ENCODE measurements at regions of chr7 and their contacts with region 1.

Region 1: DNA sequence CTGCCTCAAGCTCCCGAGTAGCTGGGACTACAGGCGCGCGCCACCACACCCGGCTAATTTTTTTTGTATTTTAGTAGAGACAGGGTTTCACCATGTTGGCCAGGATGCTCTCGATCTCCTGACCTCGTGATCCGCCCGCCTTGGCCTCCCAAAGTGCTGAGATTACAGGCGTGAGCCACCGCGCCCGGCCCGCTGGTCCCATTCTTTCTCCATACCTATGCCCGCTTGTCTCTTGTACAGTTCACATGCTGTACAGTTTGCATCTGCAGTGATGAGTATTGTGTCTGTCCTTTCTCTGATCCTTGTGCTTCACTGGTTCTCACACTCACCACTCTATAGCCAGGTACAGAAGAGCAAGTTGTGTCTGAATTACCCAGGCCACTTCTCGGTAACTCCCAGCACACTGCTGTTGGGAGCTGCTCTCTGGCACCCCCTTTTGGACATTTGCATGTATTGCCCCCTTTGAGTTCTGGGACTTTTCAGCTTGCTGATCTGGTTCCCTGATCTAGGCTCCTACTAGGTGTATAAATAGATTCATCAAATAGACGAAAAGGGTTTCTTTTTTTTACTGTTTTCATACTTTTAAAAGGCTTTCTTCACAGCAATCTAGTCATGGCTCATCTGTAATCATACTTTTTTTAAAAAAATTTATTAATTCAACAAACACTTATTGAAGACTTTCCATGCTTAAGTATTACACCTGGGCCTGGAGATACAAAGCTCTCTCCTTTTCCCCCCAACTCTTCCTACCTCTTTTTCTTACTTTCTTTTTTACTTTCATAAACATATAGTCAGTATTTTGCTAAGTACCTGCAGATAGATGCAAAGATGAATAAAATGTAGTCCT is 53.5 kb downstream of the AOAH start:
- DNase-seq: peak; percentile 85
- ATAC-seq: peak; percentile 94
- H3K4me3 Mint-ChIP-seq: no peak overlapping the region
- H3K27ac Mint-ChIP-seq: peak overlapping the region; percentile 63
- H3K4me1 Mint-ChIP-seq: peaks cover 33% of the 10 kb centered on the region
- H3K27me3 Mint-ChIP-seq: no peaks in the 10 kb centered on the region

Region 2: DNA sequence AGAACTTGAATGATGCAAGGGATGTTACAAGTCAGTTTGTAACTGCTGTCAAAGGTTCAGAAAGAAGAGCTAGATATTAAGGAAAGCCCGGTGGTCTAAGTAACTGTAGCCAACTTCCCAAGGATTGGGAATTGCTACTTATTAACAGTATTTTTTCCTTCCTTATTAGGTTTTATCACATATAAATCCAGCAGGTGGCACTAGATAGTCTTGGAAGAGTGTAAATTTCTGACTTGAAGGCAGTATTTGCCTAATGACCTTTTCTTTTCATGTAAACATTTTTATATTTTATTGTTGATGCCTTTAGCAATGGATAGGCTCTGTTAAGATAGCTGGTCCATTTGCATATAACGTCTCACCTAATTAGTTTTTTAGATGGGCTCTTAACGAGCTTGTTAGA is 229.9 kb before region 1 on chr7:
- CTCF ChIA-PET with region 1: interaction called, 19 read pairs
- POLR2A ChIA-PET with region 1: no interaction called
- DNase-seq: no peak
- ATAC-seq: no peak
- H3K4me3 Mint-ChIP-seq: no peak overlapping the region
- H3K27ac Mint-ChIP-seq: no peak overlapping the region
- H3K4me1 Mint-ChIP-seq: no peaks in the 10 kb centered on the region
- H3K27me3 Mint-ChIP-seq: no peaks in the 10 kb centered on the region

Region 3: DNA sequence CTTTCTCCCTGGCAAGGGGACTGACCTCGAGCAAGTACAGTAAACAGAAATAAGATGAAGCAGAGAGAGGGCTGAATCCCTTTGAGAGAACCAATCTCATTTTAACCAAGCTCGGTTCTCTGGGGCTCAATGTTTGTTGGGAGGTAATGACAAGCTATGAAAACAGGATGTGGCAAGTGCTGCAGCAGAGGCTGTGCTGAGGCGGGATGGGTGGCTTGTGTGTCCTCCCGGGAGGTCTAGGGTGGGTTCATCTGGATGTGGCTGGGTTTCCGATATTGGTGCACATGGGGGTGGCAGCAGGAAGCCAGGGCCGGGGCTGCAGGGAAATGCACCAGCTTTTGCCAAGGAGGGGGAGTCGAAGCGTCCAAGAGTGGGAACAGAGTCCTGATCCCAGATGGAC is 31.0 kb before region 1 on chr7:
- CTCF ChIA-PET with region 1: interaction called, 62 read pairs
- POLR2A ChIA-PET with region 1: interaction called, 5 read pairs
- DNase-seq: peak; percentile 85
- ATAC-seq: peak; percentile 91
- H3K4me3 Mint-ChIP-seq: peak overlapping the region; percentile 66
- H3K27ac Mint-ChIP-seq: peak overlapping the region; percentile 97
- H3K4me1 Mint-ChIP-seq: peaks cover 70% of the 10 kb centered on the region
- H3K27me3 Mint-ChIP-seq: no peaks in the 10 kb centered on the region

Region 4: DNA sequence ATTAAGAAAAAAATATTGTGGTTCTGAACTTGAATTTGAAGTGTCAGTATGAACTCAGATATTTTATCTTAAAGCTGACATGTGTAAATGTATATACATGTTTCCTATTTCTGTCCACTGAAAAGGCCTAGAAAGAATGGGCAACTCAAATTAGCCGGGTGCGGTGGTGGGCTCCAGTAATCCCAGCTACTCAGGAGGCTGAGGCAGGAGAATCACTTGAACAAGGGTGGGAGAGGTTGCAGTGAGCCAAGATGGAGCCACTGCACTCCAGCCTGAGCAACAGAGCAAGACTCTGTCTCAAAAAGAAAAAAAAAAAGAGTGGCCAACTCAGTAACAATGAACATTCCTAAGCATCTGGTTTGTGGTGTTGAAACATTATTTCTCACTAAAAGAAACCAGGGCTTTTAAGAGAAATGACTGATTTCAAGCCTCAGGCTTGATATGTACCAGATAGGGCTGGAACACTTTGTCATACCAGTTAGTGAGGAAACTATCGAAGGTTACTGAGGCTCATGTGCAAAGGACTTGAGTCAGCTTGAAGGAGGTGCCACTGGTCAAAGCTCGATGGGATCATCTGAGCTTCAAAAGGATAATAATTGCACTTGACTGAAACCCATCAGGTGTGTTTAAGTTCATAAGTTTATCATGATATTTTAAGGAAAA is 13.0 kb after region 1 on chr7:
- CTCF ChIA-PET with region 1: interaction called, 30 read pairs
- POLR2A ChIA-PET with region 1: no interaction called
- DNase-seq: no peak
- ATAC-seq: no peak
- H3K4me3 Mint-ChIP-seq: no peak overlapping the region
- H3K27ac Mint-ChIP-seq: peak overlapping the region; percentile 28
- H3K4me1 Mint-ChIP-seq: peaks cover 69% of the 10 kb centered on the region
- H3K27me3 Mint-ChIP-seq: no peaks in the 10 kb centered on the region

Region 5: DNA sequence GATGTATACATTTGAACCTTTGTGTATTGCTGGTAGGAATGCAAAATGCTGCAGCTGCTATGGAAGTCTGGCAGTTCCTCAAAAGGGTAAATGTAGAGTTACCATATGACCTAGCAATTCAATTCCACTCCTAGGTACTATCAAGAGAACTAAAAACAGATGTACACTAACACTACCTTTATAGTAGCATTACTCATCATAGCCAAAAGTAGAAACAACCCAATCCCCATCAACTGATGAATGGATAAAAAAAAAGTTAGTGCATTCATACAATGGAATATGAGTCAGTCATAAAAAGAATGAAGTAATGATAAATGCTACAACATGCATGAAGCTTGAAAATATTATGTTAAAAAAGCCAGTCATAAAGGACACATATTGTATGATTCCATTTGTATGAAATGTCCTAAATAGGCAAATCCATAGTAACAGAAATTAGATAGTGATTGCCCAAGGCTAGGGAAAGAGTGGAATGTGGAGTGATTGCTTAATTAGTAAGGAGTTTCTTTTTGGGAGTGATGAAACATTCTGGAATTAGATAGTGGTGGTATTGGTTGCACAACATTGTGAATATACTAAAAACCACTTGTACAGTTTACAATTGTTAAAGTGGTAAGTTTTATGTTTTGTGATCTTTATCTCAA is 149.8 kb after region 1 on chr7:
- CTCF ChIA-PET with region 1: no interaction called
- POLR2A ChIA-PET with region 1: no interaction called
- DNase-seq: no peak
- ATAC-seq: no peak
- H3K4me3 Mint-ChIP-seq: no peak overlapping the region
- H3K27ac Mint-ChIP-seq: no peak overlapping the region
- H3K4me1 Mint-ChIP-seq: no peaks in the 10 kb centered on the region
- H3K27me3 Mint-ChIP-seq: no peaks in the 10 kb centered on the region

Region 6: GRCh38 chr7:37201003-37201875 is 530.4 kb after region 1 on chr7:
- CTCF ChIA-PET with region 1: interaction called, 12 read pairs
- POLR2A ChIA-PET with region 1: no interaction called
- DNase-seq: peak; percentile 66
- ATAC-seq: peak; percentile 45
- H3K4me3 Mint-ChIP-seq: no peak overlapping the region
- H3K27ac Mint-ChIP-seq: no peak overlapping the region
- H3K4me1 Mint-ChIP-seq: peaks cover 2% of the 10 kb centered on the region
- H3K27me3 Mint-ChIP-seq: no peaks in the 10 kb centered on the region

Measured in activated CD8-positive, alpha-beta T cell treated with anti-CD3 and anti-CD28 coated beads, Interleukin-2, amount 10 ng/mL, durations not matched to agents 7 days and 5 days (primary cell).